Mammary epithelial cell (primary cell): ENCODE measurements at regions of chr20 and their contacts with region 1.

Region 1: DNA sequence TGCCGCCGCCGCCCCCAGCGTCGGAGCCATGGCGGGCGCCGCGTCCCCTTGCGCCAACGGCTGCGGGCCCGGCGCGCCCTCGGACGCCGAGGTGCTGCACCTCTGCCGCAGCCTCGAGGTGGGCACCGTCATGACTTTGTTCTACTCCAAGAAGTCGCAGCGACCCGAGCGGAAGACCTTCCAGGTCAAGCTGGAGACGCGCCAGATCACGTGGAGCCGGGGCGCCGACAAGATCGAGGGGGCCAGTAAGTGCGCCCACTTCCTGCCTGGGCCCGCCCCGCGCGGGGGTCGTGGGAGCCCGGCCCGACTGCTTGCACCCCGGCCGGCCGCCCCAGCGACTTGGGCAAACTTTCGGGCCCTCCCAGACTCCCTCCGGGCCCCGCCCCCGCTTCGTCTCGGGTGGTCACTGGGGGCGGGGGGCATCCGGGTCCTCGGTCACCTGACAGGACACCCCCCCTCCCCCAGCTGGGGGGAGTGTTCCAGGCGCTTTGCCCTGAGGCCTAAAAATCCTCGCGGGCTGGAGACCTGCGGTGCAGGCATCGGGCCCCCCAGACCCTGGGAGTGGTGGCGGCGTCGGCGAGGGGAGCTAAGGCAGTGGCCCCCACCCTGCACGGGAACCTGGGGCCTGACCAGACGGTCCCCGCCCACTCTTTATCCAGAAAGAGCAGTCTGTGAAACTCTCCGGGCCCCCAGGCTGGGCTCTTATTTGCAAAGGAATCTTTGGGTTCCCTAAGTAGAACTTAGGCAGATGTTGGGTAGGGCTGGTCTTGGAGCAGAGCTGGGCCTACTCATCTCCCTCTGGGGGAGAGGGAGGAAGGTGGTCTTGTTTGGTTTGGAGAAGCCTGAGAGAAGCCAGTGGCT is 501 bp downstream of the PLCG1 start:
- DNase-seq: peak; percentile 28
- H3K4me3 ChIP-seq: peak overlapping the region; percentile 60 to 83 (median 71)
- H3K27ac ChIP-seq: peak overlapping the region; percentile 55
- H3K4me1 ChIP-seq: peaks cover 56% of the 10 kb centered on the region
- H3K27me3 ChIP-seq: no peaks in the 10 kb centered on the region
- CTCF ChIP-seq: no peak

Region 2: GRCh38 chr20:41072190-41072863 is 65.5 kb before region 1 on chr20:
- CTCF ChIA-PET with region 1: no interaction called
- dilution Hi-C with region 1: no loop called
- in situ Hi-C with region 1: no loop called
- intact Hi-C with region 1: no loop called
- DNase-seq: peak; percentile 81
- H3K4me3 ChIP-seq: peak overlapping the region in 2 of 3 experiments; percentile 2 to 15
- H3K27ac ChIP-seq: peak overlapping the region; percentile 59
- H3K4me1 ChIP-seq: peaks cover 29% of the 10 kb centered on the region
- H3K27me3 ChIP-seq: no peaks in the 10 kb centered on the region
- CTCF ChIP-seq: no peak

Region 3: DNA sequence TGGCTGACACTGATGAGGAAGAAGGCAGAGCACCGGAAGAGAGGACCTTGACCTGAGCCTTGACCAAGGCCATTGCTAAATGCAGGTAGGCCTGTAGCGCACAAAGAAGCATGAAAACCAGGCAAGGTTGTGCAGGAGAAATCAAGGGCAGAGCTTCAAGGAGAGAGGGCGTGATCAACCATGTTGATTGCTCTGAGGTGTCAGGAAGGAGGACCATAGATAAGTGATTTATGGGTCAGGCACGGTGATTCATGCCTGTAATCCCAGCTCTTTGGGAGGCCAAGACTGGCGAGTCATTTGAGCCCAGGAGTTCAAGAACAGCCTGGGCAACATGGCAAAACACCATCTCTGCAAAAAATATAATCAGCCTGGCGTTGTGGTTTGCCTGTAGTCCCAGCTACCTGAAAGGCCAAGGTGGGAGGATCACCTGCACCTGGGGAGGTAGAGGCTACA is 11.9 kb after region 1 on chr20:
- CTCF ChIA-PET with region 1: interaction called, 4 read pairs
- dilution Hi-C with region 1: no loop called
- in situ Hi-C with region 1: no loop called
- intact Hi-C with region 1: loop called (anchors 1 kb)
- DNase-seq: peak; percentile 77
- H3K4me3 ChIP-seq: no peak overlapping the region
- H3K27ac ChIP-seq: no peak overlapping the region
- H3K4me1 ChIP-seq: peaks cover 8% of the 10 kb centered on the region
- H3K27me3 ChIP-seq: no peaks in the 10 kb centered on the region
- CTCF ChIP-seq: no peak

Region 4: DNA sequence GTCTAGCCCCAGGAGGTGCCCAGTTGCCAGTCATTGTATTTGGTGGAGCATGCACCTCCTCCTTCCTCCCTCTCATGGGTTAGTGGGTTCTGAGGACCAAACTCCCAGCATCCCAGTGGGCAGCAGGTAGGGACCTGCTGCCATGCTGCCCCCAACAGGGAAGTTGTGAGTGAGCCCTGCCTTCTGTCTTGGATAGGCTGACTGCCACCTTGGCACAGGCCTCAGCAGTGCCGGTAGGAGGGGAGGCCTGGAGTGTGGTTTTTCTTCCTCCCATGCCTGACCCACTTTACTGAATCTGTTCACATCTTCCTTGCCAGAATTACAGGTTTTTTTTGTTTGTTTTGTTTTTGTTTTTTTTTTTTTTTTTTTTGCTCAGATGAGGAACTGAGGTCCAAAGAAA is 24.0 kb after region 1 on chr20:
- CTCF ChIA-PET with region 1: no interaction called
- dilution Hi-C with region 1: no loop called
- in situ Hi-C with region 1: no loop called
- intact Hi-C with region 1: loop called (anchors 1 kb)
- DNase-seq: no peak
- H3K4me3 ChIP-seq: no peak overlapping the region
- H3K27ac ChIP-seq: no peak overlapping the region
- H3K4me1 ChIP-seq: peaks cover 20% of the 10 kb centered on the region
- H3K27me3 ChIP-seq: no peaks in the 10 kb centered on the region
- CTCF ChIP-seq: no peak

Region 5: DNA sequence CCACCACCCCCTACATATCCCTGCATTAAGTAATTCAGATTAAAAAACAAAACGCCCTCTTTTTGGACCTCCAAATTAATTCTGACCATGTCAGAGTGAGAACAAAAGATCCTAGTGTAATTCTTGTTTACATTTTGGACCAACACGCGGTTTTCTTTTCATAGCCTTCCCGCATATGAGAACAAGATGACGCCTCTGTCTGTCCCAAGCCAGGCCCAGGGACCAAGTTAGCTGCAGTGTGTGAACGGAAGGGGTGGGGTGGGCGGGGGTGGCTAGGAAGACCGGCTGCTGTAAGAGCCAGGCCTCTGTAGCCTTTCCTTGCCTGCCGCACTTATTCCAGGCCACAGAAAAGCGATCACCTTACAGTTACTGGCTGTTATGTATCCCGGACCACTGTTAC is 67.5 kb after region 1 on chr20:
- CTCF ChIA-PET with region 1: no interaction called
- dilution Hi-C with region 1: no loop called
- in situ Hi-C with region 1: no loop called
- intact Hi-C with region 1: no loop called
- DNase-seq: no peak
- H3K4me3 ChIP-seq: no peak overlapping the region
- H3K27ac ChIP-seq: no peak overlapping the region
- H3K4me1 ChIP-seq: no peaks in the 10 kb centered on the region
- H3K27me3 ChIP-seq: no peaks in the 10 kb centered on the region
- CTCF ChIP-seq: no peak